GM13977 (cell line): ENCODE measurements at regions of chr3 and their contacts with region 1.

Region 1: GRCh38 chr3:158313338-158313927 is 203.5 kb downstream of the RSRC1 start:
- DNase-seq: peak; percentile 35
- CTCF ChIP-seq: peak; percentile 64

Region 2: DNA sequence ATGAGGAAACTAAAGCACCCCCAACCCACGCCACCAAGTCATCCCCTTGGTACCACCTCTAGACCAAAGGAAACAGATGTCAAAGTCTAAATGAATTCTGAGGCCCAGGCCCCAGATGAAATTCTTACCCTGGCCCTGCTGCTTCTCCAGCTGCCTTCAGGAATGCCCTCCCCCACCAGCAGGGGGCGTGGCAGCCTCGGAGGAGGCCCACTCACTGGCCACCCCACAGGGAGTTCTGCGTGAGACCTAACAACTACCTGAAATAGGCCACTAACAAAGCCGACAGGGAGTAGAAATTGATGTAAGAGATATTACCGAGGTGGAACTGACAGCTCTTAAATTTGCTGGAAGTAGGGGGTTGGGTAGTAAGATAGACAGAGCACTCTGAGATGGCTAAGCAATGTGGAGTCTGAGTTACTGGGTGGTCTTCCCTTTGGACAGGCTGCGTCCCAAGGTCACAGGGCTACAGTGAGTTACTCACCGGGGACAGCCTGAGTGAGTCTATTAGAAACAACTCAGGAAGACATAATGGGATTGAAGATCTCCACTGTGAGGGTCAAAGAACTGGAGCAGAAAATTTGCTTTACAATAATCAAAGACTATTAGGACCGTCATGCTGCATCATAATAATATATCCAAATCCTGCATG is 448.0 kb before region 1 on chr3:
- in situ Hi-C with region 1: loop called (anchors 25 kb)
- DNase-seq: peak; percentile 53
- CTCF ChIP-seq: peak; percentile 88

Region 3: GRCh38 chr3:158109804-158110657 is 203.4 kb before region 1 on chr3 and contains the start of gene RSRC1:
- in situ Hi-C with region 1: loop called (anchors 25 kb)
- DNase-seq: peak; percentile 82
- CTCF ChIP-seq: peak; percentile 8

Region 4: GRCh38 chr3:159219231-159219630 is 905.8 kb after region 1 on chr3:
- in situ Hi-C with region 1: no loop called
- DNase-seq: no peak
- CTCF ChIP-seq: no peak